ENCODE measurements at regions of chr9 and their contacts with region 1.

Region 1: GRCh38 chr9:21611896-21612295 is 129.8 kb upstream of the IFNE start:
- DNase-seq: peak in 5 of 9 experiments; percentile 9 to 65 (median 29)
- ATAC-seq: peak; percentile 71
- H3K4me3 ChIP-seq: no peak overlapping the region
- H3K4me3 Mint-ChIP-seq: peak overlapping the region; percentile 61
- H3K27ac ChIP-seq: no peak overlapping the region
- H3K27ac Mint-ChIP-seq: peak overlapping the region; percentile 77
- H3K4me1 ChIP-seq: peaks cover 51% of the 10 kb centered on the region
- H3K4me1 Mint-ChIP-seq: peaks cover 57% of the 10 kb centered on the region
- H3K27me3 ChIP-seq: no peaks in the 10 kb centered on the region
- H3K27me3 Mint-ChIP-seq: no peaks in the 10 kb centered on the region
- CTCF ChIP-seq: no peak

Region 2: DNA sequence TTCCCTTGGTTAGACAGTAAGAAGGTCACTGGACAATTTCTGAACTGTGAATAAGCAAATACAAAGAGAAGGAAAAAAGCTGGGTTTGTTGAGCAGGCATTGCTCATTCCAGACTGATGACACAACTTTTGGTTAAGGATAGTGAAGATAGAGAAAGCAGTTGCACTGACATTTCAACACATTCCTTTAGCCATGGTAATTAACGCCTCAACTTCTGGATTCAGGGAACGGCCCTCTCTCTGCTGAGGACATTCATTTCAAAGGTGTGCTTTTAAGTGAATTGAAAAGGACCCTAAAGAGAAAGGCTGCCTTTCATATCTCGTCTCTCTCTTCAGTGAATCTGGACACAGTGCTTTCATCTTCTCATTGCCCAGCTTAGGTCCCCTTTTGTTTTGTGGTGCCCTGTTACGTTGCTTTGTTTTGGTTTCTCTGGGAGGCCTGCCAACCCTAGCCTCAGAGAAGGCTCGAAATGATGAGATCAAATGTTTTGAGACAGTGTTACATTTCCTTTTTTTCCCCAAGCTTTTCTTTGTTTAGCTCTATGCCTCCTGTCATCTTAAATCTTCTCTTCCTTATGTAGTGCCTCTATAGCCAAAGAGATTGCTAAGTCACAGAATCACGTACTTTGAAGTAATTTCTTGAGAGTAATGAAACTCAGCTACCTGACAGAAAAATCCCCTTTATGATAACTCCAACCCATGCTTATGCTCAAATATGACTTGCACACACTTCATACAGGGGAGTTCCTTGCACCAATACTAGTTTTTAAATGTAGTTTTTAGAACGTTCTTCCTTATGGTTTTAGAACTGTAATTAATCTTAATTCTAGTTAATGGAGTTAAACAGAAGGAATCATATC is 35.3 kb before region 1 on chr9:
- CTCF ChIA-PET with region 1: no interaction called
- POLR2A ChIA-PET with region 1: no interaction called
- intact Hi-C with region 1: loop called in 1 of 2 experiments (anchors 5 kb)
- DNase-seq: peak in 5 of 9 experiments; percentile 26 to 78 (median 63)
- ATAC-seq: peak; percentile 70
- H3K4me3 ChIP-seq: no peak overlapping the region
- H3K4me3 Mint-ChIP-seq: peak overlapping the region; percentile 68
- H3K27ac ChIP-seq: peak overlapping the region in 1 of 2 experiments; percentile 22
- H3K27ac Mint-ChIP-seq: peak overlapping the region; percentile 93
- H3K4me1 ChIP-seq: peaks cover 40% of the 10 kb centered on the region
- H3K4me1 Mint-ChIP-seq: peaks cover 43% of the 10 kb centered on the region
- H3K27me3 ChIP-seq: peaks cover 0 to 2% of the 10 kb centered on the region in 2 experiments
- H3K27me3 Mint-ChIP-seq: no peaks in the 10 kb centered on the region
- CTCF ChIP-seq: no peak

Region 3: GRCh38 chr9:23088932-23089366 is 1477.1 kb after region 1 on chr9:
- CTCF ChIA-PET with region 1: no interaction called
- POLR2A ChIA-PET with region 1: no interaction called
- intact Hi-C with region 1: no loop called
- DNase-seq: no peak
- ATAC-seq: no peak
- H3K4me3 ChIP-seq: no peak overlapping the region
- H3K4me3 Mint-ChIP-seq: no peak overlapping the region
- H3K27ac ChIP-seq: no peak overlapping the region
- H3K27ac Mint-ChIP-seq: no peak overlapping the region
- H3K4me1 ChIP-seq: no peaks in the 10 kb centered on the region
- H3K4me1 Mint-ChIP-seq: no peaks in the 10 kb centered on the region
- H3K27me3 ChIP-seq: no peaks in the 10 kb centered on the region
- H3K27me3 Mint-ChIP-seq: no peaks in the 10 kb centered on the region
- CTCF ChIP-seq: no peak